ENCODE measurements at regions of chr3 and their contacts with region 1.

Region 1: DNA sequence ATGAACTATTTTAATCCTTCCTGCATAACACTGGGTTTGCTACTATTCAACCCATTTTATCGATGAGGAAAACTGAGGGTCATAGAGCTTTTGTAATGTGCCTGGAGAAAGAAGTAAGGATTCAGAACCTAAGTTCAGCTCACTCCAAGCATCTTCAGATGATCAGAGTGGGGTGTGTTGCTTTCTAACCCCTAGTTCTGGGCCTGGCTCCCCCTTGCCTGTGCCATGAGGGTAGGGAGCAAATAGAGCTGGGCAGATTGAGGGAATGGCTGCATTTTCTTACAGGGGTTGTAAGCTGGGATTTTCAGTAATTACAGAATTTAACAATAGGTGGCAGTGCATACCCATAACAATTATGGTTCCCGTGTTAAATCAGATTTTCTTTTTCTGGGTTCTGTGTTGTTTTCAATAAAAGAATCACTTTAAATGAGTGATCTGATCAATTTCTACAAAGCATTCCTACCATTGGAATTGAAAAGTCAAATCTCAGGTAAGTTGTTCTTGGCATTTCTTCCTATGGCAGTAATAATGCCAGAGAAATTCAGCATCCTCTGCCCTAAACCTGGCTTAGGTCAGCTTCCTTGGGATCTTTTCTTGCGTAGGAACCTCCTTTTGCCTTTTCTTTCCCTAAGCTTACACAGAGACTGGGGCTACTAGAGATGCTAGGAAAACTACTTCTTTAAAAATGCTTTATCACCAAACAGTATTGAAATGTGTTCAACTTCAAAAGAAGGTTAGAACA is 103.8 kb upstream of the IL12A start:
- DNase-seq: no peak
- H3K4me3 ChIP-seq: no peak overlapping the region
- H3K27ac ChIP-seq: no peak overlapping the region
- H3K4me1 ChIP-seq: peaks cover 0 to 6% (median 1%) of the 10 kb centered on the region in 4 experiments; a peak in 3 of 7 replicates
- H3K27me3 ChIP-seq: no peaks in the 10 kb centered on the region
- CTCF ChIP-seq: peak in 2 of 3 experiments; percentile 44 to 52; a peak in 2 of 4 replicates
- EP300 ChIP-seq: no peak
- POLR2A ChIP-seq: no peak
- RAD21 ChIP-seq: peak; percentile 57 to 59

Region 2: GRCh38 chr3:159872374-159873109 is 12.3 kb before region 1 on chr3:
- CTCF ChIA-PET with region 1: interaction called, 21 read pairs
- POLR2A ChIA-PET with region 1: interaction called, 3 read pairs
- DNase-seq: no peak
- H3K4me3 ChIP-seq: no peak overlapping the region
- H3K27ac ChIP-seq: no peak overlapping the region
- H3K4me1 ChIP-seq: peaks cover 0 to 7% (median 3%) of the 10 kb centered on the region in 4 experiments; a peak in 3 of 7 replicates
- H3K27me3 ChIP-seq: peaks cover 0 to 1% (median 0%) of the 10 kb centered on the region in 4 experiments; a peak in 1 of 7 replicates
- CTCF ChIP-seq: no peak
- EP300 ChIP-seq: no peak
- POLR2A ChIP-seq: no peak
- RAD21 ChIP-seq: no peak

Region 3: DNA sequence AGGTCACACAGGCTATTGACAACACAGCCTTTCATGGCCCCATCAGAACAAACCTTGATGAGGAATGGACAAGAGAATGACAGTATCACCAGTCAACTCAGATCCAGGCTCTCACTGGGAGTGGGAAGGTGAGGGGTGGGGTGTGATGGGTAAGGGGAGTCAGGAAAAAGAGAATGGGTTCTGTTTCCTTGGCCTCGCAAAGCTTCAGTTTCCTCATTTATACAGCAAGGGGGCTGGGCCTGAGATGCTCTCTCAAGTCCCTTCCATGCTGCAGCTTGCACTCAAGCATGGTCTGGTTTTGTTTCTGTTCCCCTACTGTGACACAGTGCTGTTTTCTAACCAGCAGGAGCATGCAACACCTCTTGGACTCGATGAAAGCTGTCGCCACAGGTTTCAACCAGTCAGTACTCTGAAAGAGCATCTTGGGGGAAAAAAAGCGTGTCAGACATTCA is 38.1 kb after region 1 on chr3:
- CTCF ChIA-PET with region 1: interaction called, 19 read pairs
- POLR2A ChIA-PET with region 1: no interaction called
- DNase-seq: no peak
- H3K4me3 ChIP-seq: no peak overlapping the region
- H3K27ac ChIP-seq: no peak overlapping the region
- H3K4me1 ChIP-seq: no peaks in the 10 kb centered on the region
- H3K27me3 ChIP-seq: no peaks in the 10 kb centered on the region
- CTCF ChIP-seq: no peak
- EP300 ChIP-seq: no peak
- POLR2A ChIP-seq: no peak
- RAD21 ChIP-seq: no peak

Region 4: GRCh38 chr3:159978353-159978752 is 93.5 kb after region 1 on chr3:
- CTCF ChIA-PET with region 1: interaction called, 13 read pairs
- POLR2A ChIA-PET with region 1: interaction called, 3 read pairs
- DNase-seq: no peak
- H3K4me3 ChIP-seq: no peak overlapping the region
- H3K27ac ChIP-seq: no peak overlapping the region
- H3K4me1 ChIP-seq: no peaks in the 10 kb centered on the region
- H3K27me3 ChIP-seq: no peaks in the 10 kb centered on the region
- CTCF ChIP-seq: no peak
- EP300 ChIP-seq: no peak
- POLR2A ChIP-seq: no peak
- RAD21 ChIP-seq: no peak

Region 5: GRCh38 chr3:160012108-160012507 is 127.3 kb after region 1 on chr3:
- CTCF ChIA-PET with region 1: interaction called, 238 read pairs
- POLR2A ChIA-PET with region 1: no interaction called
- DNase-seq: no peak
- H3K4me3 ChIP-seq: no peak overlapping the region
- H3K27ac ChIP-seq: no peak overlapping the region
- H3K4me1 ChIP-seq: no peaks in the 10 kb centered on the region
- H3K27me3 ChIP-seq: no peaks in the 10 kb centered on the region
- CTCF ChIP-seq: no peak
- EP300 ChIP-seq: no peak
- POLR2A ChIP-seq: no peak
- RAD21 ChIP-seq: no peak

Region 6: GRCh38 chr3:160084998-160085397 is 200.2 kb after region 1 on chr3:
- CTCF ChIA-PET with region 1: no interaction called
- POLR2A ChIA-PET with region 1: no interaction called
- DNase-seq: no peak
- H3K4me3 ChIP-seq: no peak overlapping the region
- H3K27ac ChIP-seq: no peak overlapping the region
- H3K4me1 ChIP-seq: no peaks in the 10 kb centered on the region
- H3K27me3 ChIP-seq: no peaks in the 10 kb centered on the region
- CTCF ChIP-seq: no peak
- EP300 ChIP-seq: no peak
- POLR2A ChIP-seq: no peak
- RAD21 ChIP-seq: no peak

Measured in H1 (cell line).